CD8-positive, alpha-beta T cell (primary cell): ENCODE measurements at regions of chr2 and their contacts with region 1.

Region 1: DNA sequence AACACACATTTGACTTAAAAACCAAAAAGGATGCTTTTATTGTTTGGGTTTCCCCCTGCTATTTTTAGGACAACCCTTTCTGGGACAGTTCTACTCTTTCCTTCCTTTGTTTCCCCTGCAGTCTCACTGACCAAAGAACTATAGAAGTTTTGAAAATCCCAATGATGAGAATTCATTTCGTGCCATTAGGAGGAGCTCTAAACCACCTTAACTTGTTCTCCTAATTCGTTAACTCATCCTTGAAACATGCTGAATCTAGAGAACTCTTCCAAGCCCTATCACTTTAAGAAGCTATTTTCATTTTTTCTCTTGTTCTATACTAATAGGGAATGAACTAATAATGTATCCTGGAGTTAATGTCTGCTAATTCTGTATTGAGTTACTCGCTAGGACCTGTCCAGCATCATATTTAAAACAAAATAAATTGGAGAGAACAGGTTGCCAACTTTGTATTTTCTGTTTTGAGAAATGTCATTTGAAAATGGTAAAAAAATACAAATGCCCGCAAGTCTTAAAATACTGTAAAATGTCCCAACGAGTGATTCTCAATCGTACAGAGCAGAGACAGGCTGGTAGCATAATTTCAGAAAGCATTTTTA is 62.9 kb downstream of the AFTPH start:
- DNase-seq: peak in 2 of 9 experiments; percentile 57 to 70
- ATAC-seq: peak; percentile 75
- H3K4me3 ChIP-seq: no peak overlapping the region
- H3K4me3 Mint-ChIP-seq: no peak overlapping the region
- H3K27ac ChIP-seq: no peak overlapping the region
- H3K27ac Mint-ChIP-seq: no peak overlapping the region
- H3K4me1 ChIP-seq: no peaks in the 10 kb centered on the region
- H3K4me1 Mint-ChIP-seq: no peaks in the 10 kb centered on the region
- H3K27me3 ChIP-seq: no peaks in the 10 kb centered on the region
- H3K27me3 Mint-ChIP-seq: no peaks in the 10 kb centered on the region
- CTCF ChIP-seq: peak; percentile 87

Region 2: DNA sequence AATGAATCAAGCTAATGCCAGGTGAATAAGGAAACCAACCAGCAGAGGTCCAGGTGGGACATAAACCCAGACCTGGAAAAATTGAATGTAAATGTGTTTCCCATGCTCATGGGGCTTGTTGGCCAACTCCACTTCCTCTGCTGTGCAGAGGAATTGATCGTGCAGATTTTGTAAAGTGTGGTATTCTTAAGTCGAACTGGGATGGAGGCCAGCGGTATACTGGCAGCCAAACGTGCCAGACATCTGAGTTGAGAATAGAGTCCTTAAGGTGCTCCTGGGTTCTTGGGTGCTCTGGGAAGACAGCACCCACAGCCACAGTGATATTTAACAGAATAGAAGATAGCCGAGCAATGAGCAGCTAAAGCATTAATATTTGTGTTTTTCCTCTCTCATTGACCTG is 279.6 kb before region 1 on chr2:
- CTCF ChIA-PET with region 1: no interaction called
- POLR2A ChIA-PET with region 1: no interaction called
- intact Hi-C with region 1: no loop called
- DNase-seq: no peak
- ATAC-seq: no peak
- H3K4me3 ChIP-seq: no peak overlapping the region
- H3K4me3 Mint-ChIP-seq: no peak overlapping the region
- H3K27ac ChIP-seq: no peak overlapping the region
- H3K27ac Mint-ChIP-seq: no peak overlapping the region
- H3K4me1 ChIP-seq: no peaks in the 10 kb centered on the region
- H3K4me1 Mint-ChIP-seq: no peaks in the 10 kb centered on the region
- H3K27me3 ChIP-seq: no peaks in the 10 kb centered on the region
- H3K27me3 Mint-ChIP-seq: no peaks in the 10 kb centered on the region
- CTCF ChIP-seq: no peak

Region 3: DNA sequence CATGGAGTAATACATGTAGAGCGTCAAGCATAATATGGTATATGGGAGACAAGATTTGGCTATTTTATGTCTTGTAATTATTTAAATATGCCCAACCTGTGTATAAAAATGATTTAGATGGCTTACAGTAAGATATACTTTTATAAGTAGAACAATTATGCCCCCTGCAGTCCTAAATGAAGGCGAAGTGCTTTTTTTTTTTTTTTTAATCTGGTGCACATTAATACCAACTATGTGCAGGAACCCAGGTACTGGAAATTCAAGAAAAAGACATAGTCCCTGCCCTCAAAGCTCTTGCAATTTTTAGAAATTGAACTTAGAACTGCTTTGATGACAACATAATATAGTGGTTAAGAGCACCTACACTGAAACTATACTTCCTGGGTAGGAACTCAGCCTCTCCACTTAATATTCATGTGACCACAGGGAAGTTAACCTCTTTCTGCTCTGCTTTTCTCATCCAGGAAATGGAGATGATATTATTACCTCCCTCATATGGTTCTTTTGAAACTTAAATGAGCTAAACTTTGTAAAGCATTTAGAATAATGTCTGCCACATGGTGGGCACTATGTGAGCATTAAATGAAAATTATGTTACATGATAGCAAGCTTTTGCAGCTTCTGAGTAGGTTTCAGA is 24.7 kb before region 1 on chr2:
- CTCF ChIA-PET with region 1: no interaction called
- POLR2A ChIA-PET with region 1: no interaction called
- intact Hi-C with region 1: no loop called
- DNase-seq: peak in 2 of 9 experiments; percentile 46 to 61
- ATAC-seq: peak; percentile 78
- H3K4me3 ChIP-seq: no peak overlapping the region
- H3K4me3 Mint-ChIP-seq: no peak overlapping the region
- H3K27ac ChIP-seq: no peak overlapping the region
- H3K27ac Mint-ChIP-seq: no peak overlapping the region
- H3K4me1 ChIP-seq: peaks cover 14% of the 10 kb centered on the region
- H3K4me1 Mint-ChIP-seq: peaks cover 30% of the 10 kb centered on the region
- H3K27me3 ChIP-seq: no peaks in the 10 kb centered on the region
- H3K27me3 Mint-ChIP-seq: no peaks in the 10 kb centered on the region
- CTCF ChIP-seq: peak; percentile 58

Region 4: GRCh38 chr2:64599469-64599868 is 12.5 kb after region 1 on chr2:
- CTCF ChIA-PET with region 1: interaction called, 11 read pairs
- POLR2A ChIA-PET with region 1: interaction called, 4 read pairs
- intact Hi-C with region 1: no loop called
- DNase-seq: no peak
- ATAC-seq: no peak
- H3K4me3 ChIP-seq: no peak overlapping the region
- H3K4me3 Mint-ChIP-seq: no peak overlapping the region
- H3K27ac ChIP-seq: no peak overlapping the region
- H3K27ac Mint-ChIP-seq: no peak overlapping the region
- H3K4me1 ChIP-seq: no peaks in the 10 kb centered on the region
- H3K4me1 Mint-ChIP-seq: peaks cover 2% of the 10 kb centered on the region
- H3K27me3 ChIP-seq: no peaks in the 10 kb centered on the region
- H3K27me3 Mint-ChIP-seq: no peaks in the 10 kb centered on the region
- CTCF ChIP-seq: no peak

Region 5: GRCh38 chr2:64609227-64609941 is 22.4 kb after region 1 on chr2:
- CTCF ChIA-PET with region 1: interaction called, 18 read pairs
- POLR2A ChIA-PET with region 1: no interaction called
- intact Hi-C with region 1: no loop called
- DNase-seq: peak; percentile 37 to 85 (median 66)
- ATAC-seq: peak; percentile 65
- H3K4me3 ChIP-seq: peak overlapping the region; percentile 56 to 63
- H3K4me3 Mint-ChIP-seq: peak overlapping the region; percentile 79
- H3K27ac ChIP-seq: peak overlapping the region in 1 of 2 experiments; percentile 49
- H3K27ac Mint-ChIP-seq: peak overlapping the region; percentile 66
- H3K4me1 ChIP-seq: peaks cover 26% of the 10 kb centered on the region
- H3K4me1 Mint-ChIP-seq: peaks cover 29% of the 10 kb centered on the region
- H3K27me3 ChIP-seq: no peaks in the 10 kb centered on the region
- H3K27me3 Mint-ChIP-seq: no peaks in the 10 kb centered on the region
- CTCF ChIP-seq: peak; percentile 23

Region 6: GRCh38 chr2:64848363-64848762 is 261.4 kb after region 1 on chr2:
- CTCF ChIA-PET with region 1: interaction called, 11 read pairs
- POLR2A ChIA-PET with region 1: interaction called, 3 read pairs
- intact Hi-C with region 1: no loop called
- DNase-seq: no peak
- ATAC-seq: no peak
- H3K4me3 ChIP-seq: no peak overlapping the region
- H3K4me3 Mint-ChIP-seq: no peak overlapping the region
- H3K27ac ChIP-seq: no peak overlapping the region
- H3K27ac Mint-ChIP-seq: no peak overlapping the region
- H3K4me1 ChIP-seq: no peaks in the 10 kb centered on the region
- H3K4me1 Mint-ChIP-seq: no peaks in the 10 kb centered on the region
- H3K27me3 ChIP-seq: no peaks in the 10 kb centered on the region
- H3K27me3 Mint-ChIP-seq: peaks cover 2% of the 10 kb centered on the region
- CTCF ChIP-seq: no peak

Region 7: DNA sequence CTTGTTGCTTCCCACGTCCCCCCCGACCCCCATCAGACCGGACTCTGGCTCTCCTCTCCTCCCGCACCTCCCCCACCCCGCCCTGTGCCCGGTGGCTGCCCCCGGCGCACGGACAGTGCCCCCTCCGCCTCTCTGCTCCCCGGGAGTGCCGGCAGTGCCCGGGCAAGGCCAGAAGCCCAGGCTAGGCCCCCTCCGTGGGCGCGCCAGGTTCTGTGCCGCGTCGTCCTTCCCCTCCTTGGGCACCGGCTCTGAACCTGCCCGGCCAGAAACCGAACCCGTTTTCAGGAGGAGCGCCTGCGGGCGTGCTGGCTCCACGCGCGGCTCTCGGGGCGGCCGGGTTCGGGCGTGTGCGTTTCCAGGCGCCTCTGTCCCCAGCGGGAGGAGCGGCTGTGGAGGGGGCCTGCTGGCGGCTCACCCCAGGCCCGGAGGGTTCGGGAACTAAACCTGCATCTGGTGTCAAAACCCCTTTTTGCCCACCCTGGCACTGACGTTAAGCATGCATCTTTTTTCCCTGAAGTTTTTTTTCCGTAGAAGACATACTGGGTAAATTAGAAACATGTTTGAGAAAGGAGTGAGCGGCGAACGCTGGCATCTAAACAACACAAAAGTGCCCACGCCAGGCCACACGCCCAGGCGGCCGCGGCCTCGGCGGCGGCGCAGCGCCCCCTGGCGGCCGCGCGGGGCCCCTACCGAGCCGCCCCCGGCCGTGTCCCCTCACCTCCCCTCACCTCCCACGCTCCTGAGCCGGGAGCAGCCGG is 278.3 kb after region 1 on chr2:
- CTCF ChIA-PET with region 1: interaction called, 44 read pairs
- POLR2A ChIA-PET with region 1: no interaction called
- intact Hi-C with region 1: loop called (anchors 1 kb)
- DNase-seq: peak; percentile 39 to 84 (median 55)
- ATAC-seq: peak; percentile 91
- H3K4me3 ChIP-seq: peak overlapping the region; percentile 61 to 76
- H3K4me3 Mint-ChIP-seq: peak overlapping the region; percentile 81
- H3K27ac ChIP-seq: no peak overlapping the region
- H3K27ac Mint-ChIP-seq: no peak overlapping the region
- H3K4me1 ChIP-seq: peaks cover 13% of the 10 kb centered on the region
- H3K4me1 Mint-ChIP-seq: no peaks in the 10 kb centered on the region
- H3K27me3 ChIP-seq: peaks cover 0 to 2% of the 10 kb centered on the region in 2 experiments
- H3K27me3 Mint-ChIP-seq: peaks cover 4% of the 10 kb centered on the region
- CTCF ChIP-seq: peak; percentile 80

Region 8: GRCh38 chr2:64873472-64873924 is 286.5 kb after region 1 on chr2:
- CTCF ChIA-PET with region 1: interaction called, 44 read pairs
- POLR2A ChIA-PET with region 1: no interaction called
- intact Hi-C with region 1: loop called (anchors 2 kb)
- DNase-seq: peak; percentile 59 to 88 (median 78)
- ATAC-seq: peak; percentile 99
- H3K4me3 ChIP-seq: peak overlapping the region in 1 of 2 experiments; percentile 13
- H3K4me3 Mint-ChIP-seq: peak overlapping the region; percentile 20
- H3K27ac ChIP-seq: no peak overlapping the region
- H3K27ac Mint-ChIP-seq: no peak overlapping the region
- H3K4me1 ChIP-seq: peaks cover 4% of the 10 kb centered on the region
- H3K4me1 Mint-ChIP-seq: peaks cover 6% of the 10 kb centered on the region
- H3K27me3 ChIP-seq: no peaks in the 10 kb centered on the region
- H3K27me3 Mint-ChIP-seq: peaks cover 4% of the 10 kb centered on the region
- CTCF ChIP-seq: peak; percentile 88

Region 9: GRCh38 chr2:65040400-65041261 is 453.6 kb after region 1 on chr2:
- CTCF ChIA-PET with region 1: no interaction called
- POLR2A ChIA-PET with region 1: no interaction called
- intact Hi-C with region 1: loop called in 1 of 2 experiments (anchors 10 kb)
- DNase-seq: peak; percentile 48 to 86 (median 77)
- ATAC-seq: peak; percentile 100
- H3K4me3 ChIP-seq: no peak overlapping the region
- H3K4me3 Mint-ChIP-seq: no peak overlapping the region
- H3K27ac ChIP-seq: no peak overlapping the region
- H3K27ac Mint-ChIP-seq: no peak overlapping the region
- H3K4me1 ChIP-seq: peaks cover 5% of the 10 kb centered on the region
- H3K4me1 Mint-ChIP-seq: peaks cover 11% of the 10 kb centered on the region
- H3K27me3 ChIP-seq: no peaks in the 10 kb centered on the region
- H3K27me3 Mint-ChIP-seq: no peaks in the 10 kb centered on the region
- CTCF ChIP-seq: peak; percentile 83